ENCODE measurements at regions of chr7 and their contacts with region 1.

Region 1: DNA sequence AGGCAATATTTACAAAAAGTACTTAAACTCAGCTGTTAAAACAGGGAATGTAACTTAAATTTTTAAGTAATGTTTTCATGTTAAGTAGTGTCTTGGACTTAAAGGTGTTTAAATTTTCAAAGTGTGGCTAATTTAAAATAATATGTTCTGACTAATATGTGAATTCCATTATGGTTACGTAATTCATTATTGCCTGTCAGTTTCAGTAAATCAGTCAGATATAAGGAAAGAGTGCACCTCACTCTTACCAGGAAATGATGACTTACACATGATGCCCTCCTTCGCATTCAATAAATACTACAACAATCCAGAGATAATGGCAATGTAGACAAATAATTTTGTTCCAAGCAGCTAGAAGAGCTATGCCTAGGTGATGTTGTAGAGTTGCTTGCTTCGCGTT is 69.0 kb upstream of the WNT16 start:
- DNase-seq: no peak
- ATAC-seq: no peak
- H3K4me3 ChIP-seq: no peak overlapping the region
- H3K27ac ChIP-seq: no peak overlapping the region
- H3K4me1 ChIP-seq: peaks cover 2% of the 10 kb centered on the region; the same call in 1 of the 2 replicates
- H3K27me3 ChIP-seq: no peaks in the 10 kb centered on the region
- CTCF ChIP-seq: no peak
- POLR2A ChIP-seq: no peak
- RAD21 ChIP-seq: no peak

Region 2: GRCh38 chr7:120869700-120870099 is 390.1 kb before region 1 on chr7:
- CTCF ChIA-PET with region 1: no interaction called
- POLR2A ChIA-PET with region 1: no interaction called
- dilution Hi-C with region 1: no loop called
- in situ Hi-C with region 1: no loop called
- intact Hi-C with region 1: no loop called
- DNase-seq: no peak
- ATAC-seq: no peak
- H3K4me3 ChIP-seq: no peak overlapping the region
- H3K27ac ChIP-seq: no peak overlapping the region
- H3K4me1 ChIP-seq: no peaks in the 10 kb centered on the region
- H3K27me3 ChIP-seq: peaks cover 2% of the 10 kb centered on the region
- CTCF ChIP-seq: no peak
- POLR2A ChIP-seq: no peak
- RAD21 ChIP-seq: no peak

Region 3: GRCh38 chr7:121219026-121219425 is 40.8 kb before region 1 on chr7:
- CTCF ChIA-PET with region 1: no interaction called
- POLR2A ChIA-PET with region 1: no interaction called
- dilution Hi-C with region 1: loop called (anchors 5 kb)
- in situ Hi-C with region 1: no loop called
- intact Hi-C with region 1: no loop called
- DNase-seq: no peak
- ATAC-seq: no peak
- H3K4me3 ChIP-seq: no peak overlapping the region
- H3K27ac ChIP-seq: no peak overlapping the region
- H3K4me1 ChIP-seq: peaks cover 6% of the 10 kb centered on the region
- H3K27me3 ChIP-seq: no peaks in the 10 kb centered on the region
- CTCF ChIP-seq: no peak
- POLR2A ChIP-seq: no peak
- RAD21 ChIP-seq: no peak